Activated naive CD4-positive, alpha-beta T cell treated with anti-CD3 and anti-CD28 coated beads for 36 hours (primary cell): ENCODE measurements at regions of chr12 and their contacts with region 1.

Region 1: GRCh38 chr12:12786716-12787601 is 1.5 kb downstream of the APOLD1 start:
- DNase-seq: peak; percentile 67
- H3K4me3 Mint-ChIP-seq: peak overlapping the region; percentile 83
- H3K27ac Mint-ChIP-seq: peak overlapping the region; percentile 84
- H3K4me1 Mint-ChIP-seq: peaks cover 27% of the 10 kb centered on the region
- H3K27me3 Mint-ChIP-seq: no peaks in the 10 kb centered on the region

Region 2: GRCh38 chr12:12803186-12803585 is 16.2 kb after region 1 on chr12:
- CTCF ChIA-PET with region 1: interaction called, 36 read pairs
- intact Hi-C with region 1: loop called (anchors 1 kb)
- DNase-seq: peak; percentile 61
- H3K4me3 Mint-ChIP-seq: no peak overlapping the region
- H3K27ac Mint-ChIP-seq: no peak overlapping the region
- H3K4me1 Mint-ChIP-seq: peaks cover 53% of the 10 kb centered on the region
- H3K27me3 Mint-ChIP-seq: no peaks in the 10 kb centered on the region

Region 3: DNA sequence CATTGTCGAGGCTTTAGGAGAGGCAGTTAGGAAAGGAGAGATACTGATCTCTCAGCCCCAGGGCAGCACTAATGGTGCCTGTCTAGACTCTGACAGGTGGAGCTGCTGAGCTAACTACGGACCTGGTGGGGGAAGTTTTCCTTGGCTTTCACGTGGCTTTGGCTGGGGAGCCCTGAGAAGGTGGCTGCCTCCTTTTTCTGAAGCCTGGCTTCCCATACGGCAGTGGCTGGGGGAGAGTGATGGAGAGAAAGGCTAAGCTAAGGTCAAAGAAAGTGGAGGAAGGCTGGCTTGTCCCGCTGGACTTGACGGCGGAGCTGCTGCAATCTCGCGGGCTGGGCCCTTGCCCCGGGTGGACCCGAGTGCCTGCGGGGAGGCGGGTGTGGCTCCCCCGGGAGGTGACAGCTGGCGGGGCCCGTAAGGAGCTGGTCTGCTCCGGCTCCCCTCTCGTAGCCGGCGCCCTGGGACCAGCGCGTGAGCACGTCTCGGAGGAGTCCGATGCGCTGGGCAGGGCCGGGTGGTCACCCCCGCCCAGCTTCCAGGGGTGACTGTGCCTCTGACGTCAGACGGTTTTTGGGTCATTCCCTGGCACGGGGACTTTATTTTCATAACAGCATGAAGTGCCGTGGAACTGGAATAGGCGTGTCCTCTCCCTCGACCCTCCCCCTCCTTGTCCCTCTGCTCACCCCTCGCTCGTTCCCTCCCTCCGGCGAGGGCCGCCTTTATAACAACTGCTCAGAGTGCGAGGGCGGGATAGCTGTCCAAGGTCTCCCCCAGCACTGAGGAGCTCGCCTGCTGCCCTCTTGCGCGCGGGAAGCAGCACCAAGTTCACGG is 104.1 kb after region 1 on chr12 and contains the start of gene GPRC5A:
- CTCF ChIA-PET with region 1: interaction called, 4 read pairs
- intact Hi-C with region 1: loop called (anchors 2 kb)
- DNase-seq: peak; percentile 68
- H3K4me3 Mint-ChIP-seq: peak within 1 kb of the TSS; percentile 82
- H3K27ac Mint-ChIP-seq: no peak within 1 kb of the TSS
- H3K4me1 Mint-ChIP-seq: peaks cover 16% of the 10 kb centered on the region
- H3K27me3 Mint-ChIP-seq: peaks cover 14% of the 10 kb centered on the region
- total RNA-seq, gene GPRC5A: 0.24 to 0.64 TPM

Region 4: GRCh38 chr12:12916135-12916944 is 129.4 kb after region 1 on chr12:
- CTCF ChIA-PET with region 1: interaction called, 6 read pairs
- intact Hi-C with region 1: loop called (anchors 1 kb)
- DNase-seq: peak; percentile 94
- H3K4me3 Mint-ChIP-seq: no peak overlapping the region
- H3K27ac Mint-ChIP-seq: no peak overlapping the region
- H3K4me1 Mint-ChIP-seq: peaks cover 7% of the 10 kb centered on the region
- H3K27me3 Mint-ChIP-seq: peaks cover 6% of the 10 kb centered on the region

Region 5: GRCh38 chr12:12983420-12984035 is 196.6 kb after region 1 on chr12:
- CTCF ChIA-PET with region 1: interaction called, 7 read pairs
- intact Hi-C with region 1: loop called (anchors 1 kb)
- DNase-seq: peak; percentile 38
- H3K4me3 Mint-ChIP-seq: no peak overlapping the region
- H3K27ac Mint-ChIP-seq: no peak overlapping the region
- H3K4me1 Mint-ChIP-seq: no peaks in the 10 kb centered on the region
- H3K27me3 Mint-ChIP-seq: no peaks in the 10 kb centered on the region

Region 6: DNA sequence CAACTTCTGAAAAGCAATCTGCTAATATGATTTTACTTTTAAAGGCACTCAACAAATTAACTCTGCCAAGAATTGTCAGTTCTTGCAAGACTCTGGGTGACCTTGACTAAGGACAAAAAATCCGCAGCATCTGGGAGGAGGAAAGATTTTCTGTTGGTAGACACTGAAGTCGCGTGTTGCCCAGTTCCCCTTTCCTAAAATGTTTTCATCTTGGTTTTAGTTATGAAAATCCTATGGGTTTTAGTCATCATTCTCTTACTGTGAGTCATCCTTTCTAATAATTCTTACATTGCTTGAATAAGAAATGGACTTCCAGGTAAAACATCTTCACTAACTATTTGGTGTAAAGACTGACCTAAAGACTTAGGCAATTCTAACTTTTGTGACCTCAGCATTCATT is 307.4 kb after region 1 on chr12:
- CTCF ChIA-PET with region 1: no interaction called
- intact Hi-C with region 1: loop called (anchors 1 kb)
- DNase-seq: no peak
- H3K4me3 Mint-ChIP-seq: no peak overlapping the region
- H3K27ac Mint-ChIP-seq: no peak overlapping the region
- H3K4me1 Mint-ChIP-seq: peaks cover 16% of the 10 kb centered on the region
- H3K27me3 Mint-ChIP-seq: no peaks in the 10 kb centered on the region